RWPE1 (cell line): ENCODE measurements at regions of chr2 and their contacts with region 1.

Region 1: GRCh38 chr2:179661986-179662385 is 199.4 kb downstream of the ZNF385B start:
- DNase-seq: no peak
- H3K27ac ChIP-seq: no peak overlapping the region
- CTCF ChIP-seq: no peak

Region 2: GRCh38 chr2:178324077-178324476 is 1337.9 kb before region 1 on chr2:
- CTCF ChIA-PET with region 1: interaction called, 10 read pairs
- POLR2A ChIA-PET with region 1: no interaction called
- DNase-seq: no peak
- H3K27ac ChIP-seq: no peak overlapping the region
- CTCF ChIP-seq: no peak